ENCODE measurements at regions of chr4 and their contacts with region 1.

Region 1: GRCh38 chr4:137531986-137532868 is at the start of gene PCDH18:
- DNase-seq: peak; percentile 74
- H3K4me3 ChIP-seq: peak within 1 kb of the TSS; percentile 32 to 56 (median 40)
- H3K27ac ChIP-seq: peak within 1 kb of the TSS; percentile 77 to 84 (median 82)
- H3K4me1 ChIP-seq: no peaks in the 10 kb centered on the region
- H3K27me3 ChIP-seq: no peaks in the 10 kb centered on the region
- CTCF ChIP-seq: no peak
- EP300 ChIP-seq: no peak
- POLR2A ChIP-seq: peak; percentile 57
- total RNA-seq, gene PCDH18: 10.6 to 27.1 (median 20.8) TPM

Region 2: GRCh38 chr4:136784326-136784725 is 747.9 kb before region 1 on chr4:
- in situ Hi-C with region 1: no loop called
- intact Hi-C with region 1: no loop called
- DNase-seq: no peak
- H3K4me3 ChIP-seq: no peak overlapping the region
- H3K27ac ChIP-seq: no peak overlapping the region
- H3K4me1 ChIP-seq: no peaks in the 10 kb centered on the region
- H3K27me3 ChIP-seq: no peaks in the 10 kb centered on the region
- CTCF ChIP-seq: no peak
- EP300 ChIP-seq: no peak
- POLR2A ChIP-seq: no peak

Region 3: GRCh38 chr4:137156054-137156453 is 376.2 kb before region 1 on chr4:
- in situ Hi-C with region 1: no loop called
- intact Hi-C with region 1: no loop called
- DNase-seq: no peak
- H3K4me3 ChIP-seq: no peak overlapping the region
- H3K27ac ChIP-seq: no peak overlapping the region
- H3K4me1 ChIP-seq: no peaks in the 10 kb centered on the region
- H3K27me3 ChIP-seq: no peaks in the 10 kb centered on the region
- CTCF ChIP-seq: no peak
- EP300 ChIP-seq: no peak
- POLR2A ChIP-seq: no peak

Region 4: DNA sequence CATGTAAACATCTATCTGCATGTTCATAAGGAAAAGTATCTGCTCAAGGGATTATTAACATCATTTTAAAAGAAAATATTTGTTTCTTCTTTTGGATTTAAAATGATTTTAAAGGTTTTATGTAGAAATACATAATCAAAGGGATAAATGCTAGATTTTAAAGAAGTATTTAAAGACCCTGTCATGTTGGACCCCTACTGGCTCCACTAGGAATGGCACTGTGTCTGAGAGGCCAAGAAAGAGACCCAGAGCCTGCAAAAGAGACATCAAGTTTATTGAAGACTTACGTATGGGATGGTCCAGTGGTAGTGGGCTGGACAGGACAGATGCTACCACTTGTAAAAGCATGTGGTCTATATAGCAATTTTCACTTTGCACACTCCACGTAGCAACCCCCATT is 78.7 kb after region 1 on chr4:
- in situ Hi-C with region 1: no loop called
- intact Hi-C with region 1: no loop called
- DNase-seq: no peak
- H3K4me3 ChIP-seq: no peak overlapping the region
- H3K27ac ChIP-seq: peak overlapping the region in 1 of 4 donors; percentile 61
- H3K4me1 ChIP-seq: no peaks in the 10 kb centered on the region
- H3K27me3 ChIP-seq: no peaks in the 10 kb centered on the region
- CTCF ChIP-seq: peak in 1 of 5 experiments; percentile 23
- EP300 ChIP-seq: no peak
- POLR2A ChIP-seq: no peak

Region 5: DNA sequence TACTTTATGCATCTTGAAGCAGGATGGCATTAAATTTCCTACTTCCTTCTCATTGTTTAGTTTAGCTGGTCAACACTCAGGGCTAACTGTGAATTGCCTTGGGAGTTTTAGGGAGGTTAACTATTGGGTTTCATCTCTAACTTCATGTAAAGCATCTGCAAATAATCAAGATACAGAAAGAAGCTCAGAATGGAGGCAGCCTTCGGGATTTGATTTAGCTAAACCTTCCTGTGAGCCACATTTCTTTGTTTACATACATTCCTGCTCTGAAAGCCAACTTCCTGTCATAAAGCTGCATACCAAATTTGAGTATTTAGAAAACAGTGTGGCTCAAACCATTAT is 131.8 kb after region 1 on chr4:
- in situ Hi-C with region 1: no loop called
- intact Hi-C with region 1: loop called (anchors 5 kb)
- DNase-seq: no peak
- H3K4me3 ChIP-seq: no peak overlapping the region
- H3K27ac ChIP-seq: peak overlapping the region; percentile 60 to 77 (median 70)
- H3K4me1 ChIP-seq: peaks cover 0 to 24% (median 5%) of the 10 kb centered on the region in 4 donors
- H3K27me3 ChIP-seq: no peaks in the 10 kb centered on the region
- CTCF ChIP-seq: no peak
- EP300 ChIP-seq: no peak
- POLR2A ChIP-seq: no peak